Activated CD4-positive, alpha-beta memory T cell treated with anti-CD3 and anti-CD28 coated beads for 36 hours (primary cell): ENCODE measurements at regions of chr2 and their contacts with region 1.

Region 1: GRCh38 chr2:13006829-13007717 is 290.3 kb downstream of the TRIB2 start:
- DNase-seq: peak; percentile 68
- H3K4me3 Mint-ChIP-seq: no peak overlapping the region
- H3K27ac Mint-ChIP-seq: no peak overlapping the region
- H3K4me1 Mint-ChIP-seq: no peaks in the 10 kb centered on the region
- H3K27me3 Mint-ChIP-seq: peaks cover 8% of the 10 kb centered on the region

Region 2: DNA sequence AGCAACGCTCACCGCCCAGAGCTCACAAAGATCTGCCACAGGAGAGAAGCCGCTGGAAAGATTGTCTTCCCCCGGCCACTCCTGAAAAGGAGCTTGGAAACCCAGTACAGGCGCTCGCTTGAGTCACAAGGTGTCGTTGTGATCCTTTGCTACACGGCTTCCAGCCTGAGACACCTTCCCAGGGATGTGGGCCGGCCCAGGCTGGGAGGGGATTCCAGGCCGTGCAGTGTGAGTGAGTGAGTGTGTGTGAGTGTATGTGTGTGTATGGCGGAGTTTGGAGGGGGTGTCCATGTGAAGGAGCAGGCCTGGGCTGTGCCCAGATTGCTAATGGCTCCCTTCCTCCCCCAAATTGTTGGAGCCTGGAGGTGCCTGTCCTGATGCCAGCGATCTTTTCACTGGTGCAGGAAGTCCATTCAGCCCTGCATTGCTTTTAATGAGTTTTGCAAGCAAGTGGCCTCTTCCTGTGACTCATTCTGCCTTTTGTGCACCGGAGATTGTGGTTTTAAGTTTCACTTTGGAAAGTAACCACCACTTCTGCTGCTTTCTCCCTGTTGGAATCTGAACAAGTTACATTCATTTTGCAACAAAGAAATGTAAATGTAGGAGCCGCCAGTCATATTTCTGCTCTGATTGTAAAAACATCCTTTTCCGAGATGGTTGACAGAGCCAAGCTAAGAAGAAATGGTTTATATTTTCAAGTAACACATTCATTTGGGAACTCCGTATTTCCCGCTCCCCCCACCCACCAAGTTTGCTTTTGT is 1176.9 kb before region 1 on chr2:
- CTCF ChIA-PET with region 1: interaction called, 24 read pairs
- POLR2A ChIA-PET with region 1: interaction called, 3 read pairs
- intact Hi-C with region 1: loop called (anchors 1 kb)
- DNase-seq: peak; percentile 74
- H3K4me3 Mint-ChIP-seq: peak overlapping the region; percentile 49
- H3K27ac Mint-ChIP-seq: peak overlapping the region; percentile 72
- H3K4me1 Mint-ChIP-seq: peaks cover 41% of the 10 kb centered on the region
- H3K27me3 Mint-ChIP-seq: peaks cover 32% of the 10 kb centered on the region

Region 3: DNA sequence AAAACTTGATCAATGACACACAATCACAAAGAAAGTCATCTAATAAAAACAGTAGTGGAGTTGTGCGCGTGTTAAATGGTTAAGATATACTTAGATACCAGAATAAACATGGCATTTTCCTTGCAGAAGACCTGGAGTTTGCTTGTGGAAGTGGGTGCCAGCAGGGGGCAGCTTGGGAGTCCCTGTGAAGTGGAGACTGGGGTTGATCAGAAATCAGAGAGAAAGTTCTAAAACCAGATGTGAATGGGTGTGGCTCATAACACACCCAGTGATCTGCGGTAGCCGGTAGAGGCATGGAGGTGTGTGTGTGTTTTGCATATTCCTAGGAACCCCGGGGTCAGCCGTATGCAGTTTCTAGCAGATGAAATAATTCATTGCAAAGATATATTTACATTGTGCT is 590.5 kb before region 1 on chr2:
- CTCF ChIA-PET with region 1: interaction called, 22 read pairs
- POLR2A ChIA-PET with region 1: no interaction called
- intact Hi-C with region 1: loop called (anchors 2 kb)
- DNase-seq: peak; percentile 69
- H3K4me3 Mint-ChIP-seq: no peak overlapping the region
- H3K27ac Mint-ChIP-seq: no peak overlapping the region
- H3K4me1 Mint-ChIP-seq: peaks cover 43% of the 10 kb centered on the region
- H3K27me3 Mint-ChIP-seq: no peaks in the 10 kb centered on the region

Region 4: DNA sequence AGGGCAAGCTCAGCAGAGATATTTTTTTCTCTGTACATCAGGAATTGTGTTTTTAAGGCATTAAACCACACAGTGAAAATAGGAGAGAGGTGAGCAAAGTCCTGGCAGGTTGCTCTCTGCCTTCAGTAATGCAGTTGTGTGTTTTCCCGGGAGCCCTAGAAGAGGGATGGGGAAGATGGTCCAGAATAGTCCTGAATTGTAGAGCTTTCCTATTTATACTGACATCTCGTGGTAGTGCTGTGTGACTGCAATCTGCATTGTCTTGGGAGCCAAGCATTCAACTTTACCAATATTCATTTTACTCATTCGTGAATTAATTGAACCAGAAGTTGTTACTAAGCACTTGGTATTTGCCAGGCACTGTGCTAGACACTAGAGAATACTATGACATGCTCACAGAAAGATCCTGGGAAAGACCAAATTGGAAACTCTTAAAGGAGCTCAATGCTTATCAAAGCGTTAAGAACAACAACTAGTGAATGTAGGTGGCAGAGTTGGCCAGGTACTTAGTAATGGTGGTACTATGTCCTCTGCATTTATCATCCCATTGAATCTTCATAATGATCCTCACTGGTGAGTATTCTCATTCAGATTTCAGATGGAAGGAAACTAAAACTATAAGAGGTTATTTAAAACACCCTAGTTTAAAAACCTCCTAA is 75.8 kb before region 1 on chr2:
- CTCF ChIA-PET with region 1: interaction called, 37 read pairs
- POLR2A ChIA-PET with region 1: no interaction called
- intact Hi-C with region 1: no loop called
- DNase-seq: no peak
- H3K4me3 Mint-ChIP-seq: no peak overlapping the region
- H3K27ac Mint-ChIP-seq: no peak overlapping the region
- H3K4me1 Mint-ChIP-seq: peaks cover 17% of the 10 kb centered on the region
- H3K27me3 Mint-ChIP-seq: no peaks in the 10 kb centered on the region

Region 5: GRCh38 chr2:12965540-12966269 is 41.4 kb before region 1 on chr2:
- CTCF ChIA-PET with region 1: interaction called, 15 read pairs
- POLR2A ChIA-PET with region 1: no interaction called
- intact Hi-C with region 1: no loop called
- DNase-seq: no peak
- H3K4me3 Mint-ChIP-seq: no peak overlapping the region
- H3K27ac Mint-ChIP-seq: no peak overlapping the region
- H3K4me1 Mint-ChIP-seq: peaks cover 19% of the 10 kb centered on the region
- H3K27me3 Mint-ChIP-seq: peaks cover 2% of the 10 kb centered on the region

Region 6: GRCh38 chr2:13021470-13021957 is 14.4 kb after region 1 on chr2:
- CTCF ChIA-PET with region 1: interaction called, 12 read pairs
- POLR2A ChIA-PET with region 1: no interaction called
- intact Hi-C with region 1: no loop called
- DNase-seq: no peak
- H3K4me3 Mint-ChIP-seq: no peak overlapping the region
- H3K27ac Mint-ChIP-seq: no peak overlapping the region
- H3K4me1 Mint-ChIP-seq: no peaks in the 10 kb centered on the region
- H3K27me3 Mint-ChIP-seq: peaks cover 14% of the 10 kb centered on the region

Region 7: DNA sequence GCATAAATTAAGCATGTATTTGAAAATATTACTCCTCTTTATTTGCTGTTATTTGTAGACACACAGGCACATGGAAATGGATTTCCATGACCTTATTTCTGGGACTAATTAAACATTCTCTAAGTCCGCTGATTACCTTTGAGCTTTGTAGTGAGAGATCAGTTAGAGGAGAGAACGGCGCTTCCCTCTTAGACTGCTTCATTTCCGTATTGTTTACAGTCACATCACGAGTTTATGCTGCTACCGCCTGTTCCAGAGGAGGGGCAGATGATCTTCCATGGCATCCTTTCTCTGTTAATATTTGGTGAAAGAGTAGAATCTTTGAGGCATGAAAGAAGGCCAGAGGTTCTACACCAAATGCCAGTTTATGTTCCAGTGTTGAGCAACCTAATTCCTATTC is 114.0 kb after region 1 on chr2:
- CTCF ChIA-PET with region 1: no interaction called
- POLR2A ChIA-PET with region 1: no interaction called
- intact Hi-C with region 1: no loop called
- DNase-seq: no peak
- H3K4me3 Mint-ChIP-seq: no peak overlapping the region
- H3K27ac Mint-ChIP-seq: no peak overlapping the region
- H3K4me1 Mint-ChIP-seq: no peaks in the 10 kb centered on the region
- H3K27me3 Mint-ChIP-seq: peaks cover 1% of the 10 kb centered on the region